ENCODE measurements at regions of chr2 and their contacts with region 1.

Region 1: GRCh38 chr2:85288244-85288725 is 39.5 kb downstream of the TGOLN2 start:
- DNase-seq: peak; percentile 95
- H3K4me3 ChIP-seq: no peak overlapping the region
- H3K27ac ChIP-seq: peak overlapping the region; percentile 93
- H3K4me1 ChIP-seq: peaks cover 33% of the 10 kb centered on the region
- H3K27me3 ChIP-seq: no peaks in the 10 kb centered on the region
- CTCF ChIP-seq: no peak

Region 2: DNA sequence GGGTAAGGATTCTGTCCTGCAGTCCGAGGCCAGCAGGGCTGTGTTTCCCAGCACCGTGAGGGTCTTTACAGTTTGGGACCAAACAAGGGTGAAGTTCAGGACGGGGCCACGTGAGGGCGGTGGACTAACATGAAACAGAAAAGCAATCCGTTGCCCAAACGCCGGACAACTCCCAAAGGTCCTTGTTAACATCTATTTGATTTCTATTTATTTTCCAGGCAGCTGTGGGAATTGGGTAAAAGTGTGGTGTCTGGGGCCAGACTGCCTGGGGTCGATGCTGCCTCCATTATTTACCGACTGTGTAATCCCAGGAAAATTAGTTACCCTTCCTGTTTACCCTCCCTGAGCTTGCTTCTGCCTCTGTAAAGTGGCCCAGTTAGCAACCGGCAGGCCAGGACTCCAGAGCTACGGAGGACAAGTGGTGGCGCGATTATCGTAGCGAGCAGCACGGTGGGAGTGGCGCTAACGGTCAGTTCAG is 221.4 kb before region 1 on chr2:
- CTCF ChIA-PET with region 1: no interaction called
- dilution Hi-C with region 1: loop called (anchors 25 kb)
- in situ Hi-C with region 1: loop called (anchors 5 kb)
- intact Hi-C with region 1: loop called (anchors 1 kb)
- DNase-seq: peak; percentile 40
- H3K4me3 ChIP-seq: no peak overlapping the region
- H3K27ac ChIP-seq: no peak overlapping the region
- H3K4me1 ChIP-seq: peaks cover 5% of the 10 kb centered on the region
- H3K27me3 ChIP-seq: no peaks in the 10 kb centered on the region
- CTCF ChIP-seq: peak; percentile 74 to 88

Region 3: GRCh38 chr2:85165088-85165690 is 123.1 kb before region 1 on chr2:
- CTCF ChIA-PET with region 1: no interaction called
- dilution Hi-C with region 1: loop called (anchors 5 kb)
- in situ Hi-C with region 1: no loop called
- intact Hi-C with region 1: no loop called
- DNase-seq: no peak
- H3K4me3 ChIP-seq: no peak overlapping the region
- H3K27ac ChIP-seq: no peak overlapping the region
- H3K4me1 ChIP-seq: peaks cover 6% of the 10 kb centered on the region
- H3K27me3 ChIP-seq: no peaks in the 10 kb centered on the region
- CTCF ChIP-seq: no peak

Region 4: GRCh38 chr2:85266146-85267041 is 21.9 kb before region 1 on chr2:
- CTCF ChIA-PET with region 1: no interaction called
- dilution Hi-C with region 1: no loop called
- in situ Hi-C with region 1: no loop called
- intact Hi-C with region 1: loop called (anchors 1 kb)
- DNase-seq: peak; percentile 33
- H3K4me3 ChIP-seq: no peak overlapping the region
- H3K27ac ChIP-seq: no peak overlapping the region
- H3K4me1 ChIP-seq: peaks cover 28% of the 10 kb centered on the region
- H3K27me3 ChIP-seq: no peaks in the 10 kb centered on the region
- CTCF ChIP-seq: peak; percentile 88 to 95

Region 5: GRCh38 chr2:85302121-85302520 is 13.8 kb after region 1 on chr2:
- CTCF ChIA-PET with region 1: no interaction called
- dilution Hi-C with region 1: no loop called
- in situ Hi-C with region 1: no loop called
- intact Hi-C with region 1: loop called (anchors 1 kb)
- DNase-seq: no peak
- H3K4me3 ChIP-seq: no peak overlapping the region
- H3K27ac ChIP-seq: no peak overlapping the region
- H3K4me1 ChIP-seq: peaks cover 5% of the 10 kb centered on the region
- H3K27me3 ChIP-seq: no peaks in the 10 kb centered on the region
- CTCF ChIP-seq: no peak

Region 6: GRCh38 chr2:85911814-85912692 is 623.8 kb after region 1 on chr2:
- CTCF ChIA-PET with region 1: no interaction called
- dilution Hi-C with region 1: no loop called
- in situ Hi-C with region 1: no loop called
- intact Hi-C with region 1: no loop called
- DNase-seq: peak; percentile 94
- H3K4me3 ChIP-seq: no peak overlapping the region
- H3K27ac ChIP-seq: peak overlapping the region; percentile 94
- H3K4me1 ChIP-seq: peaks cover 33% of the 10 kb centered on the region
- H3K27me3 ChIP-seq: no peaks in the 10 kb centered on the region
- CTCF ChIP-seq: no peak

Measured in mammary epithelial cell (primary cell).